IMR-90 (cell line): ENCODE measurements at regions of chr7 and their contacts with region 1.

Region 1: DNA sequence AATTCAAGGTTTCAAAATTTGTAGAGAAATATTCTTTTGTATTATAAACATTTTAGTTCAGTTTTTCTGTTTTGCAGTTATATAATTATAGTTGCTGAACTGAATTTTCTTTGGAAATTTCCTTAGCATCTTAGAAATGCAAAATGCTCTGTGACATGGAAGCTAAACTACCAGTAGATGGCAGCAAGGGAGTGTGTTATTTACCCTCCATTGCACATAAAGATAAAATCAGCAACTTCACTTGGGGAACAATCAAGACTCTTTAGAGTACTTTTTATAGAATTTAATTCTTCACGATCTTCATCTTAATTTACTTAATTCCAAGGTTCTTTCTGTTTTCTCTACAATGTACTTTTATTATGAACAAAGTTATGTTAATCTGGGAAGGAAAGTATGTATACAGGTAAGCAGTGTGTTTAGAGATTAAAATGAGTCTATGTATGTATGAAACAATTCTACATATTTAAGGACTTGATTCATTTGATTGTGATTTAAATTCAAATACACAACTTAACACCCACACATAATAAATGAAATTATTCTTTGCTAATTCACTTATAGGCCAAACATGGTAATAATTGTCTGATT is 404.2 kb downstream of the THSD7A start:
- DNase-seq: peak; percentile 56
- ATAC-seq: peak; percentile 73
- H3K4me3 ChIP-seq: no peak overlapping the region
- H3K27ac ChIP-seq: no peak overlapping the region
- H3K4me1 ChIP-seq: no peaks in the 10 kb centered on the region
- H3K27me3 ChIP-seq: no peaks in the 10 kb centered on the region
- CTCF ChIP-seq: peak; percentile 68
- POLR2A ChIP-seq: no peak
- RAD21 ChIP-seq: peak; percentile 64

Region 2: DNA sequence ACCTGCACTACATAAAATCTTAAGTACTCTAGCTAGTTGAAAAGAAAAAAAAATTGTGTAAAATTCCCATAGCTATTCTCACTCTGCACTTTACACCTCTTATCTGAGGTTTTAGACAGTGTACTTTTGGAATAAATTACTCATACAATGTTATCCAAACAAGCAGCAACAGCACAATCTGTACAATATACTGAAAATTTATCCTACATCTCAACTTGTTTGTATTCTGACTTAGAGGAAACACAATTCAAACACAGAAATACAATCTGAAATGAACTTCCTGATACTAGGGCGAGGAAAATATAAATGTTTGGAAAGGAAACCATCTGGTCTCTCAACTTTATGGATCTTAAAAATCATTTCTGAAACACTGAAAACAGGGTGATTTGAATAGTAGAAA is 22.5 kb after region 1 on chr7:
- CTCF ChIA-PET with region 1: no interaction called
- POLR2A ChIA-PET with region 1: no interaction called
- dilution Hi-C with region 1: no loop called
- in situ Hi-C with region 1: no loop called
- intact Hi-C with region 1: no loop called
- DNase-seq: no peak
- ATAC-seq: no peak
- H3K4me3 ChIP-seq: no peak overlapping the region
- H3K27ac ChIP-seq: no peak overlapping the region
- H3K4me1 ChIP-seq: no peaks in the 10 kb centered on the region
- H3K27me3 ChIP-seq: no peaks in the 10 kb centered on the region
- CTCF ChIP-seq: no peak
- POLR2A ChIP-seq: no peak
- RAD21 ChIP-seq: no peak

Region 3: DNA sequence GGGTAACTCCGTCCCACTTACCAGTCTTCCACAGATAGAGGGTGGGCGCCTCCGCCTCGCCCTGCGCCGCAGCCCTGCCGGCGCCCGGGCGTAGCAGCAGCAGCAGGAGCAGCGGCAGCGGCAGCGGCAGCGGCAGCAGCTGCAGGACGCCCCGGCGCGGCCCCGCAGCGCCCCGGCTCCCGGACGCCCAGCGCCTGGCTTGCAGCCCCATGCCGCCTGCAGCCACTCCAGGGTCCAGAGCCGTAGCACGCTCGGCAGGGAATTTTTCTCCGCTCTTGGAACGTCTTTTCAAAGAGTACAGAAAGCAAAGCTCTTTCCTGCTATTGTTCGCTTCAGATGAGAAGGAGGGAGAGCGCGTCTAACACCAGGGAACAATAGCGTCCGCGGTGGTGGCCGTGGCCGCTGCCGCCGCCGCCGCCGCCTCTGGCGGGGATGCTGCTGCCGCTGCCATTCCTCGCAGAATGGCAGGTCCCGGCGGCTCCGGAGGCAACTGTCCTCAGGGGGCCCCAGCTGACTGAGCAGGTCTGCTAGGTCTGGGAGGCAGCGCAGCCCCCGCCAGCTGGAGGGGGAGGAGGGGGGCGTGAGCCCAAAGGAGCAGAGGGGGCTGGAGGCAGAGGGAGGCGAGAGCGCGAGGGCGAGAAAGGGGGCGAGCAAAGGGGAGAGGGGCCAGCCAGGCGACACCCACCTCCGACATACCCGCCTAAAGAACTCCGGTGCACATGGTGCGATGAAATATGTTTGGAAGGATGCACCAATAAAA is 404.1 kb after region 1 on chr7 and contains the start of gene THSD7A:
- CTCF ChIA-PET with region 1: no interaction called
- POLR2A ChIA-PET with region 1: no interaction called
- dilution Hi-C with region 1: no loop called
- in situ Hi-C with region 1: no loop called
- intact Hi-C with region 1: loop called (anchors 2 kb)
- DNase-seq: peak; percentile 13
- ATAC-seq: peak; percentile 97
- H3K4me3 ChIP-seq: peak within 1 kb of the TSS; percentile 61
- H3K27ac ChIP-seq: no peak within 1 kb of the TSS
- H3K4me1 ChIP-seq: no peaks in the 10 kb centered on the region
- H3K27me3 ChIP-seq: peaks cover 11% of the 10 kb centered on the region
- CTCF ChIP-seq: no peak
- POLR2A ChIP-seq: no peak
- RAD21 ChIP-seq: no peak
- total RNA-seq, gene THSD7A: under 0.01 and 0.18 TPM in 2 replicates

Region 4: GRCh38 chr7:12322284-12322902 is 894.6 kb after region 1 on chr7:
- CTCF ChIA-PET with region 1: no interaction called
- POLR2A ChIA-PET with region 1: no interaction called
- dilution Hi-C with region 1: no loop called
- in situ Hi-C with region 1: loop called (anchors 25 kb)
- intact Hi-C with region 1: loop called (anchors 1 kb)
- DNase-seq: peak; percentile 38
- ATAC-seq: no peak
- H3K4me3 ChIP-seq: no peak overlapping the region
- H3K27ac ChIP-seq: no peak overlapping the region
- H3K4me1 ChIP-seq: no peaks in the 10 kb centered on the region
- H3K27me3 ChIP-seq: no peaks in the 10 kb centered on the region
- CTCF ChIP-seq: peak; percentile 72
- POLR2A ChIP-seq: no peak
- RAD21 ChIP-seq: peak; percentile 70

Region 5: DNA sequence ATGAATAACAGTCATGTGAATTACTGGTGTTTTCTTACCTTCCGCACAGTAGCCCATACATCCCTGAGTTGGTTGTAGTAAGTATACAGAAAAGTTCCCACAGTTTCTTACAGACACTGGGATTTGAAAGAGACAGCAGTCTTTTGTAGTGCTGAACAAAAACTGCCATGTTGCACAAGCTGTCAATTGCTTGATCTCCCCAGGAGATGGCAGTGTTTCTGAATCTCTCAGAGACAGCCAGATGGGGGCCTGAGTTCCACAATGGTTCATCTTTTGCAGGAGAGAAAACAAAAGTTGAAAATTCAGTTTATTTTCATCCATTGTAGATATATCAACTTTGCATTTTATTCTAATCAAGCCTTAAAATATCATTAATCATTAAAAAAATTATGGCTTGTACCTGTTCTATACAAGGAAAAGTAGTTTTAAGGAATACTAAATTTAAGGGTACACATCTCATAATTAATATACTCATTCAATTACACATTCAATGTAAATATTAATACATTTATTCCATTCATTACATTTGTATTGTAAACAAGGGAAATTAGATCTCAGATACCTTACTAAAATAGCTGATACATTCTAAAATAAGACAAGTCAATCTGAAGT is 961.4 kb after region 1 on chr7:
- CTCF ChIA-PET with region 1: no interaction called
- POLR2A ChIA-PET with region 1: no interaction called
- dilution Hi-C with region 1: no loop called
- in situ Hi-C with region 1: no loop called
- intact Hi-C with region 1: loop called (anchors 10 kb)
- DNase-seq: peak; percentile 61
- ATAC-seq: peak; percentile 76; the same call in 1 of the 2 replicates
- H3K4me3 ChIP-seq: no peak overlapping the region
- H3K27ac ChIP-seq: no peak overlapping the region
- H3K4me1 ChIP-seq: no peaks in the 10 kb centered on the region
- H3K27me3 ChIP-seq: no peaks in the 10 kb centered on the region
- CTCF ChIP-seq: peak; percentile 73
- POLR2A ChIP-seq: no peak
- RAD21 ChIP-seq: peak; percentile 52